K562 (cell line): ENCODE measurements at regions of chr17 and their contacts with region 1.

Region 1: DNA sequence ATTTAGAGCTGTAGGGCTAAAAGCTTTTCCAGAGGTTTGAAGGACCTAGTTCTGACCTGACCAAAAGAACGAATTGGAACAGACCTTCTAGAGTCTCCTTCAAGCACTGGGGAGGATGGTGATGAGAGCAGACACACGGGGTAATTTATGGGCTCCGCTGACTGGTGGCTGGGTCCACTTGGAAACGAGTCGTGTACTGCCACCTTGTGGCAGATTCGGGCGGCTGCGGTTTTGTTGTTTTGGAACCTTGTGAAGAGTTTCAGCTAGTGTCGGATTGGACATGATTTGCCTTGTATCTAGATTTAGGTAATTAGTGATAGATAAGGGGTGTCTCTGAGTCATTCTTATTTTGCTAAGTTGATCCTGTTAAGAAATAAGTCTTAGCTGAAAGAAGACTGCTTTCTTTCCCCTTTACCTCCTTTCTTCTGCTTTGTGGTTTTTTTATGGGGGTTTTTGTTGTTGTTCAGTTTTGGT is 98.9 kb downstream of the AATF start:
- DNase-seq: peak; percentile 75 to 91 (median 80)
- ATAC-seq: peak; percentile 98
- H3K4me3 ChIP-seq: no peak overlapping the region
- H3K27ac ChIP-seq: no peak overlapping the region
- H3K4me1 ChIP-seq: peaks cover 0 to 6% of the 10 kb centered on the region in 2 experiments; a peak in 1 of 5 replicates
- H3K27me3 ChIP-seq: no peaks in the 10 kb centered on the region
- CTCF ChIP-seq: peak; percentile 85 to 93 (median 91)
- EP300 ChIP-seq: no peak
- POLR2A ChIP-seq: no peak
- RAD21 ChIP-seq: peak; percentile 82 to 92

Region 2: GRCh38 chr17:36705874-36706731 is 341.6 kb before region 1 on chr17:
- CTCF ChIA-PET with region 1: no interaction called
- POLR2A ChIA-PET with region 1: no interaction called
- in situ Hi-C with region 1: no loop called
- intact Hi-C with region 1: no loop called
- DNase-seq: peak; percentile 53 to 73 (median 65)
- ATAC-seq: peak; percentile 95
- H3K4me3 ChIP-seq: no peak overlapping the region
- H3K27ac ChIP-seq: no peak overlapping the region
- H3K4me1 ChIP-seq: peaks cover 3 to 16% of the 10 kb centered on the region in 2 experiments; a peak in 3 of 5 replicates
- H3K27me3 ChIP-seq: peaks cover 2 to 21% of the 10 kb centered on the region in 2 experiments; a peak in 3 of 5 replicates
- CTCF ChIP-seq: peak; percentile 80 to 83 (median 81)
- EP300 ChIP-seq: no peak
- POLR2A ChIP-seq: no peak
- RAD21 ChIP-seq: peak; percentile 62 to 87

Region 3: GRCh38 chr17:36849871-36850348 is 197.8 kb before region 1 on chr17:
- CTCF ChIA-PET with region 1: interaction called, 4 read pairs
- POLR2A ChIA-PET with region 1: interaction called, 5 read pairs
- in situ Hi-C with region 1: no loop called
- intact Hi-C with region 1: loop called (anchors 1 kb)
- DNase-seq: peak; percentile 48 to 57 (median 56)
- ATAC-seq: peak; percentile 88
- H3K4me3 ChIP-seq: no peak overlapping the region
- H3K27ac ChIP-seq: no peak overlapping the region
- H3K4me1 ChIP-seq: peaks cover 0 to 6% of the 10 kb centered on the region in 2 experiments; a peak in 3 of 5 replicates
- H3K27me3 ChIP-seq: peaks cover 3 to 24% of the 10 kb centered on the region in 2 experiments; a peak in 4 of 5 replicates
- CTCF ChIP-seq: peak; percentile 42 to 70 (median 53)
- EP300 ChIP-seq: no peak
- POLR2A ChIP-seq: no peak
- RAD21 ChIP-seq: peak in 1 of 2 experiments; percentile 56; a peak in 2 of 4 replicates

Region 4: DNA sequence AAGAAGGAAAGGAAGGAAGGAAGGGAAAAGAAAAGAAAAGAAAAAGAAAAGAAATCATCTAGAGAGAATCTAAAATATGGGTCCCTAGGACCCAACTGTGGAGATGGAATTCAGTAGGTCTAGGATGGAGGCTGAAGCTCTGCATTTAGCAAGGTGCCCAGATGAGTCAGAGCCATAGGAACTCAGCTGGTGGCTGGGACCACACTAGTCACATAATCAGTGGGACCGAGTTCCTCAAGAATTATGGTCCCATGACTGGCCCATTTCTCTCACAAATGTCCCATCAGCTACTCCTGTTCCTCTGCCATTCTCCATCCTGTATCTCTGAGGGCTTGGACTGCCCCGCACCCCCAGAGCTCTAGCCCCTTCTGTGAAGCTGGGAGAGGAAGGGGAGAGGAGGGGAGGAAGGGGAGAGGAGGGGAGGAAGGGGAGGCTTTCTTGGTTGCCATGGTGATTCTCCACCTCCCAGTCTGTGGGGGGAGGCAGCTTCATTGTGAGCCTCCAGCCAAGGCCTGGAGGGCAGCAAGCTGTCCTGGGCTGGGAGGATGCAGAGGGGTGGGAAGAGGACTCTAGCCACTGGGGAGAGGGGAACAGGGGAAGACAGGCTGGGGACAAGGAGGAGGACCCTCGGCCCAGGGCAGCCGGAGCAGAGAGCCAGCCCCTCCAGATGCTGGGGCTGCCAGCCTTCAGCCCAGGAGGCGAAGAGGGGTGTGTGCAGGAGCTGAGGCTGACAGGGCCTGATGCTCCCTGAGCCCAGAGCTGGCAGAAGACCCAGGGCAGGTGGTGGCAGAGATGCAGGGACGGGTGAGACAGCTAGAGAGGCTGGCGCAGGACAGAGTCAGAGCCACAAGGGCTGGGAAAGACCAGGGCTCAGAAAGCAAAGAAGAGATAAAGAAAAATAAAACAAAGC is 148.2 kb before region 1 on chr17:
- CTCF ChIA-PET with region 1: interaction called, 3 read pairs
- POLR2A ChIA-PET with region 1: interaction called, 3 read pairs
- in situ Hi-C with region 1: no loop called
- intact Hi-C with region 1: loop called (anchors 10 kb)
- DNase-seq: no peak
- ATAC-seq: no peak
- H3K4me3 ChIP-seq: no peak overlapping the region
- H3K27ac ChIP-seq: no peak overlapping the region
- H3K4me1 ChIP-seq: no peaks in the 10 kb centered on the region
- H3K27me3 ChIP-seq: peaks cover 16 to 50% of the 10 kb centered on the region in 2 experiments; a peak in 4 of 5 replicates
- CTCF ChIP-seq: no peak
- EP300 ChIP-seq: no peak
- POLR2A ChIP-seq: no peak
- RAD21 ChIP-seq: no peak